ENCODE measurements at regions of chr17 and their contacts with region 1.

Region 1: DNA sequence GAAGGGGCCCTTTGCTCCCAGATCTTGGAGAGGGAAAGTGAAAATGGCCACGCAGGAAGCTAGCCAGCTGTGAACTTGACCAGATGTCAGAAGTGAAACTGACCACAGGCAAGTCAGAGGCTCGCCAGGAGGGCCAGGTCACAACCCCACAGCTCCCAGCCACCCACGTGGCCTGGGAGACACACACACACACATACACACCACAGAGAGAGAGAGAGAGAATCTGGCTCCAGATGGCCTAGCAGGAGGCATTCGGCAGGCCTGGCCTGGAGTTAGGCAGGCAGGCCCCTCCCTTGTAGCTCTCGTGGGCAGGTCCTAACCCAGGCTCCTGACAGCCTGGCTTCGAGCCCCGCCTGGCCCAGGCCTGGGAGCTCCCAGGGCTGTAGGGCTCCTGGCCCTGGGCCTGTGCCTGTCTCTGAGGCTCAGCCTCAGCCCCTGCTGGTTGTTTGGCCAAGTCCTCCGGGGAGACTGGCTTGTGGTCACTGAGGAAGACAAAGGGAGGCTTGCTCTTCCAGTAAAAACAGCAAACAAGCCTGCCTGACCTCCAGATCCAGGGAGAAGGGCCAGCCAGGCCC is 20.2 kb downstream of the NGFR start:
- DNase-seq: peak; percentile 73
- ATAC-seq: peak; percentile 92
- H3K4me3 Mint-ChIP-seq: no peak overlapping the region
- H3K27ac Mint-ChIP-seq: peak overlapping the region; percentile 75
- H3K4me1 Mint-ChIP-seq: peaks cover 53% of the 10 kb centered on the region
- H3K27me3 Mint-ChIP-seq: no peaks in the 10 kb centered on the region; the same call in 1 of the 2 replicates
- CTCF ChIP-seq: no peak

Region 2: DNA sequence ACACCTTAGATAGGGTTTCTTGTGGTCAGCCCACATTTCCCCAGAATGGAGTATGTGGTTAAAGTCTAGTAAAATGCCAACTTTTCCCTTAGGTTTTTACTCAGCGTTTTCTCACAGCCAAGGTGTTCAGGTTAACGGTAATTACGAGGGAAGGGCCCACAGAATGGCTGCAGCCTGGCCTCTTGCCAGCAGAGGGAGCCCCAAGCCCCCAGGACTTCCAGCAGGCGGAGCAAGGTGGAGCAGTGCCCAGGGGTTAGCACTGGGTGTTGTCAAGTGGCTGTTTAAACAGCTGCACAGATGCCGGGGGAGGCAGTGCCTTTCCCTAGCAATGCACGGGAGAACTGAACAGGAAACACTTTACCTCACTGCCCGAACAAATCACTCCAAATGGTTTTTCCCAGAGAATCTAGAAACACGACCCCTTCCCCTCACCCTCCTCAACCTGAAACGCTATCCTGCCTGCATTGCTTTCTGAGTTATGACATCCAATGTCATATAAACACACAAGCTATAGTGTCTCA is 107.2 kb before region 1 on chr17:
- CTCF ChIA-PET with region 1: interaction called, 27 read pairs
- POLR2A ChIA-PET with region 1: no interaction called
- DNase-seq: peak; percentile 91
- ATAC-seq: peak; percentile 99
- H3K4me3 Mint-ChIP-seq: no peak overlapping the region
- H3K27ac Mint-ChIP-seq: 0 out of 2 replicates have a peak overlapping the region, but pooled peaks have one; percentile 73
- H3K4me1 Mint-ChIP-seq: no peaks in the 10 kb centered on the region
- H3K27me3 Mint-ChIP-seq: no peaks in the 10 kb centered on the region
- CTCF ChIP-seq: peak; percentile 91

Region 3: GRCh38 chr17:49501504-49501903 is 13.8 kb before region 1 on chr17:
- CTCF ChIA-PET with region 1: interaction called, 199 read pairs
- POLR2A ChIA-PET with region 1: no interaction called
- DNase-seq: no peak
- ATAC-seq: no peak
- H3K4me3 Mint-ChIP-seq: no peak overlapping the region
- H3K27ac Mint-ChIP-seq: no peak overlapping the region
- H3K4me1 Mint-ChIP-seq: peaks cover 51% of the 10 kb centered on the region
- H3K27me3 Mint-ChIP-seq: peaks cover 51% of the 10 kb centered on the region
- CTCF ChIP-seq: no peak

Region 4: DNA sequence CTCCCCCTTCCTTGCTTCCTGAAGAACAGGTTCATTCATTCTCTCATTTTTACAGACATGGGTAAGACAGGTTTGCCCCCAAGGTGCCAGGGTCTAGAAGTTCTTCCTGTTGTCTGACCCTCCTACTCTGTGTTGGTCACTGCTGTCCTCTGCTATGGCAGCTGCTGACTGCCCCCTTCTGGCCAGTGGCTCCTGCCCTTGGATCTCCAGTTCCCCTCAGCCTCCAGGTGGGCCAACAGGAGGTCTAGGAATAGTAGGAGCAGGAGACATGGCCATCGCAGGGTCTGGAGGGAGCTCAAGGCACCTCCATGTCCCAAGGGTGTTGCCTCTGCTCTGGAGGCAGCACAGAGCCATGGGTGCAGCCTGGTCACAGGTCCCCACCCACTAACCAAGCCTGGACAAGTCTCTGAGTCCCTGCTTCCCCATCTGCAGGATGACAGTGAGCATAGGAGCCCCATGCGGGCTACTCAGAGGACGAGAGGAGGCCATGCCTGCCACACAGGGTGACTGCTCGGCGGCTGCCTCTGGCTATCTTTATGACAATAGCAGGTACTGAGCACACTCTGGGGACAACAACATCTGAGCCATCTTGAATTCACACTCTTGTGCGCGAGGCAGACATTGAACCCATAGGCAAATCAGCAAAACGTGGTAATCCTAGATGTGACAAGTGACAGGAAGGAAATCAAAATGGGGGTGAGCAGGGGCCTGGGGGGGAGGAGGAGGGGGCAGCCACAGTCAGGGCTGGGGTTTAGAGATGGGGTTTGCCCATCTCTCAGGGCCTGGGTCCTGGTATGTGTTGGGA is 33.4 kb after region 1 on chr17:
- CTCF ChIA-PET with region 1: interaction called, 42 read pairs
- POLR2A ChIA-PET with region 1: no interaction called
- DNase-seq: peak; percentile 83
- ATAC-seq: peak; percentile 81
- H3K4me3 Mint-ChIP-seq: no peak overlapping the region
- H3K27ac Mint-ChIP-seq: no peak overlapping the region
- H3K4me1 Mint-ChIP-seq: peaks cover 25% of the 10 kb centered on the region
- H3K27me3 Mint-ChIP-seq: peaks cover 5% of the 10 kb centered on the region; the same call in 1 of the 2 replicates
- CTCF ChIP-seq: peak; percentile 44; the same call in 1 of the 2 replicates

Region 5: DNA sequence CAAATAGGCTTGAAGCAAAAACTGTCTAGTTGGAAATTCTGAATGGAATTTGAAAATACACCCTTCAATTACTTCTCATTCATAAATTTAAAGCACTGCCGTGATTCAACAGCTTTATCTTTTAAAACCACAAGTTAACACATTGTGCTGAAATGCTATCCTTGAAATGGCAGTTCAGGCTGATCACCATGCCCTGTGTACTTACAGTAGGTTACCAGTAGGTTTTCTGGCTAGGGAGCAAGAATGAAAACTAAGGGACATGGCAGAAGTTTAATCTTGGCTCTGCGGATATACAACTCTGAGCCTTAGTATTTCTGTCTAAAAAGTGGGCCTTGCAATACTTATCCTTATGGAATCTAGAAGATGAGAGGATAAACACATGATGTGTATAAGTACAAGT is 88.4 kb after region 1 on chr17:
- CTCF ChIA-PET with region 1: no interaction called
- POLR2A ChIA-PET with region 1: no interaction called
- DNase-seq: no peak
- ATAC-seq: no peak
- H3K4me3 Mint-ChIP-seq: no peak overlapping the region
- H3K27ac Mint-ChIP-seq: no peak overlapping the region
- H3K4me1 Mint-ChIP-seq: no peaks in the 10 kb centered on the region
- H3K27me3 Mint-ChIP-seq: no peaks in the 10 kb centered on the region
- CTCF ChIP-seq: no peak